CD8-positive, alpha-beta T cell (primary cell): ENCODE measurements at regions of chr13 and their contacts with region 1.

Region 1: GRCh38 chr13:31909864-31910551 is 121.6 kb upstream of the FRY start:
- DNase-seq: peak; percentile 3 to 73 (median 53)
- ATAC-seq: peak; percentile 23
- H3K4me3 ChIP-seq: no peak overlapping the region
- H3K4me3 Mint-ChIP-seq: no peak overlapping the region
- H3K27ac ChIP-seq: no peak overlapping the region
- H3K27ac Mint-ChIP-seq: no peak overlapping the region
- H3K4me1 ChIP-seq: no peaks in the 10 kb centered on the region
- H3K4me1 Mint-ChIP-seq: no peaks in the 10 kb centered on the region
- H3K27me3 ChIP-seq: no peaks in the 10 kb centered on the region
- H3K27me3 Mint-ChIP-seq: peaks cover 12% of the 10 kb centered on the region
- CTCF ChIP-seq: peak; percentile 98

Region 2: DNA sequence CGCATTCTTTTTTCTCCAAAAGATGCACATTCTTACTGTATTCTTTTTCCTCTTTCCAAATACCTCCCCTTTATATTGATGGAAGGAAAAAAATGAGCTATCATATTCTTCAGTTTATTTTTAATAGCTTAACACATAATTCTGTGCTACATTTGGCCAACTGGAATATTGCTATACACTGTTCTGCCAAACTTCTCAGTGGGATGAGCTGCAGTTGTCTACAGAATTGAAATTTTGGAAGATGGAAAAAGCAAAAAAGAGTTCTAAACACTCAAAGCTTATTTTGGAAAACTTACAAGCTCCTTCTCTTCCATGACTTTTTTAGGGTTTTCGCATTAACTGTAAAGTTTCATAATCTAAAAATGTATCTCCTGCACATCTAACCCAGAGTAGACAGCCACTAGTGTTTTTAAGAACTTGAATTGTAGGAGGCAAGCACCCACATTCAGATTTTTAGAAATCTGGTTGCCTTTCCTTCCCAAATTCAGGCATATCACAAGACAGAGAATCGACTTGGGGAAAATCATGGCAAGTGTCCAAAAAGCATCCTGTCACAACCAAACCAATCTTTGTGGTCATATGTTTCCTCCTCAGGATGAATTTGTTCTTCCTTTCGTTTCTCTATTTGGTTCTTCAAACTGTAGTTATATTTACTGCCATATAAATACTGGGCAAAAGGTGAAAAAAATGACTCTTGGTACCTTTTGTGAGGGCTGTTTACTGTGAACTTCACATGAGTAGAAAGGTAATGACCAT is 10.1 kb after region 1 on chr13:
- CTCF ChIA-PET with region 1: interaction called, 16 read pairs
- POLR2A ChIA-PET with region 1: no interaction called
- intact Hi-C with region 1: no loop called
- DNase-seq: no peak
- ATAC-seq: no peak
- H3K4me3 ChIP-seq: no peak overlapping the region
- H3K4me3 Mint-ChIP-seq: no peak overlapping the region
- H3K27ac ChIP-seq: no peak overlapping the region
- H3K27ac Mint-ChIP-seq: no peak overlapping the region
- H3K4me1 ChIP-seq: no peaks in the 10 kb centered on the region
- H3K4me1 Mint-ChIP-seq: no peaks in the 10 kb centered on the region
- H3K27me3 ChIP-seq: no peaks in the 10 kb centered on the region
- H3K27me3 Mint-ChIP-seq: no peaks in the 10 kb centered on the region
- CTCF ChIP-seq: no peak

Region 3: GRCh38 chr13:32443111-32443510 is 533.1 kb after region 1 on chr13:
- CTCF ChIA-PET with region 1: interaction called, 5 read pairs
- POLR2A ChIA-PET with region 1: no interaction called
- intact Hi-C with region 1: loop called in 1 of 2 experiments (anchors 2 kb)
- DNase-seq: peak in 6 of 9 experiments; percentile 14 to 77 (median 47)
- ATAC-seq: peak; percentile 75
- H3K4me3 ChIP-seq: no peak overlapping the region
- H3K4me3 Mint-ChIP-seq: no peak overlapping the region
- H3K27ac ChIP-seq: no peak overlapping the region
- H3K27ac Mint-ChIP-seq: no peak overlapping the region
- H3K4me1 ChIP-seq: no peaks in the 10 kb centered on the region
- H3K4me1 Mint-ChIP-seq: peaks cover 3% of the 10 kb centered on the region
- H3K27me3 ChIP-seq: no peaks in the 10 kb centered on the region
- H3K27me3 Mint-ChIP-seq: no peaks in the 10 kb centered on the region
- CTCF ChIP-seq: peak; percentile 65

Region 4: DNA sequence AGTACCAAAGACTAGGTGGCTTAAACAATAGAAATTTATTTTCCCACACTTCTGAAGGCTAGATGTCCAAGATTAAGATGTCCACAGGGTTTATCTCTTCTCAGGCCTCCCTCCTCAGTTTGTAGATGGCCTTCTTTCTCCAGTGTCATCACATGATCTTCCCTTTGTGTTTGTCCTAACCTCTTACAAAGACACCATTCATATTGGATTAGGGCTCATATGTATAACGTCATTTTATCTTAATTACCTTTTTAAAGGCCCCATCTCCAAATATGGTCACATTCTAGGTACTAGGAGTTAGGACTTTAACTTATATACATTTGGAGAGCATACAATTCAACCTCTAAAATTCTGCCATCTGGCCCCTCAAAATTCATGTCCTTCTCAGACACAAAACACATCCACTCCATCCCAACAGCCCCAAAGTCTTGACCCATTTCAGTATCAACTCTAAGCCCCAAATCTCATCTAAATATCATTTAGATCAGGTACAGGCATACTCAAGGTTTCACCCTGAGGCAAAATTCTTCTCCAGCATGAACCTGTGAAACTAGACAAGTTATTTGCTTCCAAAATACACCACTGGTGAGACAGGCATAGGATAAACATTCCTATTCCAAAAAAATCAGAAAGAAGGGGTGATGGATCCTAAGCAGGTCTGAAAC is 594.4 kb after region 1 on chr13:
- CTCF ChIA-PET with region 1: no interaction called
- POLR2A ChIA-PET with region 1: no interaction called
- intact Hi-C with region 1: no loop called
- DNase-seq: no peak
- ATAC-seq: no peak
- H3K4me3 ChIP-seq: no peak overlapping the region
- H3K4me3 Mint-ChIP-seq: no peak overlapping the region
- H3K27ac ChIP-seq: no peak overlapping the region
- H3K27ac Mint-ChIP-seq: peak overlapping the region; percentile 68
- H3K4me1 ChIP-seq: no peaks in the 10 kb centered on the region
- H3K4me1 Mint-ChIP-seq: peaks cover 6% of the 10 kb centered on the region
- H3K27me3 ChIP-seq: no peaks in the 10 kb centered on the region
- H3K27me3 Mint-ChIP-seq: no peaks in the 10 kb centered on the region
- CTCF ChIP-seq: no peak

Region 5: GRCh38 chr13:32639502-32640105 is 729.6 kb after region 1 on chr13:
- CTCF ChIA-PET with region 1: no interaction called
- POLR2A ChIA-PET with region 1: no interaction called
- intact Hi-C with region 1: loop called in 1 of 2 experiments (anchors 10 kb)
- DNase-seq: peak; percentile 10 to 81 (median 56)
- ATAC-seq: peak; percentile 92
- H3K4me3 ChIP-seq: no peak overlapping the region
- H3K4me3 Mint-ChIP-seq: no peak overlapping the region
- H3K27ac ChIP-seq: no peak overlapping the region
- H3K27ac Mint-ChIP-seq: no peak overlapping the region
- H3K4me1 ChIP-seq: no peaks in the 10 kb centered on the region
- H3K4me1 Mint-ChIP-seq: peaks cover 32% of the 10 kb centered on the region
- H3K27me3 ChIP-seq: no peaks in the 10 kb centered on the region
- H3K27me3 Mint-ChIP-seq: no peaks in the 10 kb centered on the region
- CTCF ChIP-seq: peak; percentile 73

Region 6: GRCh38 chr13:33723772-33724435 is 1813.9 kb after region 1 on chr13:
- CTCF ChIA-PET with region 1: no interaction called
- POLR2A ChIA-PET with region 1: no interaction called
- intact Hi-C with region 1: loop called in 1 of 2 experiments (anchors 5 kb)
- DNase-seq: peak; percentile 21 to 82 (median 56)
- ATAC-seq: peak; percentile 84
- H3K4me3 ChIP-seq: no peak overlapping the region
- H3K4me3 Mint-ChIP-seq: no peak overlapping the region
- H3K27ac ChIP-seq: no peak overlapping the region
- H3K27ac Mint-ChIP-seq: no peak overlapping the region
- H3K4me1 ChIP-seq: peaks cover 6% of the 10 kb centered on the region
- H3K4me1 Mint-ChIP-seq: peaks cover 13% of the 10 kb centered on the region
- H3K27me3 ChIP-seq: no peaks in the 10 kb centered on the region
- H3K27me3 Mint-ChIP-seq: no peaks in the 10 kb centered on the region
- CTCF ChIP-seq: peak; percentile 65